Lower lobe of right lung (tissue), 2 donors: ENCODE measurements at regions of chr12 and their contacts with region 1.

Region 1: DNA sequence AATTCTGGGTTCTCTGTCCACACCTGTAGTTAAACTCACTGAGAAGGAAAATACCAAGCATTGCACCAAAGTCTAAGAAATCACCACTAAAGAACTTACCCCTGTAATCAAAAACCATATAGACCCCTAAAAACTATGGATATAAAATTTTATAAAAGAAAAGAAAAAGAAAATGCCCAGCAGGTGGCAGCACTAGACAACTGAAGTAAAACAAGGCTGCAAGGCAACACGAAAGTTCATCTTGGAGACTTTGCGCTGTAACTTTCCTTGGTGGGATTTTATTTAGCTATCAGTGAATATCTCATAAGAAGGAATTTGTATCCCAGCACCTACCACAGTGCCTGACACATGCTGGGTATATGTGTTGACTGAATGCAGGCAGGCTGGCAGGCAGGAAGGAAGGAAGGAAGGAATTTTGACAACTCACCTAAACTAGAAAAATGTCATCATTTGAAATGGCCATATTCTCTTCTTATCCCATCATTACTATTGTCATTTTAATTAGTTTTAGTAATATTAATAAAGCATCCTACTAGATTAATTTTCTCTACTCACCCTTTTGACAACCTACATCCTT is 68.2 kb upstream of the ETV6 start:
- DNase-seq: no peak
- ATAC-seq: peak in 1 of 2 donors; percentile 61
- H3K4me3 ChIP-seq: no peak overlapping the region
- H3K27ac ChIP-seq: no peak overlapping the region
- H3K4me1 ChIP-seq: peaks cover 19% of the 10 kb centered on the region
- H3K27me3 ChIP-seq: no peaks in the 10 kb centered on the region
- CTCF ChIP-seq: peak; percentile 60

Region 2: DNA sequence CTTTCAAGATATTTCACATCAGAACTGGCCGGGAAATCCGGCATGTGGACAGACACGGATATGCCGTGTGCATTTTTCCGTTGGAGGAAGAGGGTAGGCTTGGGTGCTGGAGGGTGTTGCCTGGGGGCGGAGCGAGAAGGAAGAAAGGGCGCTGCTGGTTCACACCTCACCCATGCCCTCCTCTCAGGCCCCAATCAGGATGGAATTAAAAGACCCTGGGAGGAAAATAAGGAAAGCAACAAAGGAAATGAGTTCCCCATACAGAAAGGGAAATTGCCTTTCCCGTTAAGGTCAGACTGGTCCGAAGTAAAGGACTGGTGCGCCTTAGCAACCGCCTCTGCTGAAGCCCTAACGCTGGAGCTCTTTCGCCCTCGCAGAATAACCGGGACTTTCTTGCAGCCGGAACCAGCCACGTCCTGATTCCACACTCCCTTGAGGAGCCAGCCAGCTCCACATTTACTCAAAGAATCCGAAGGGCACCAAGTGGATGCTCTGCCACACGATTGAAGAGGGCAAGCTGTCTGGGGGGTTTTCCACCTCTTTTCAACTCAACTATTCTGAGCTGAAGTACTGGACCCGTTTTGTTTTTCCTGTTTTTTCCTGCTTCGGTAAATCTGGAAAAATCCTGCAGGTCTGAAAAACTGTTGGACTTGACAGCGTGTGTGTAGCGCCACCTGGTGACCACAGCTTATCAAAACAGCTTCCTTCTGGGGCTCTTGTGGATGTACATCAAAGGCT is 451.8 kb after region 1 on chr12:
- intact Hi-C with region 1: loop called (anchors 2 kb)
- DNase-seq: peak; percentile 74
- ATAC-seq: peak; percentile 90 to 91
- H3K4me3 ChIP-seq: peak overlapping the region; percentile 57
- H3K27ac ChIP-seq: peak overlapping the region; percentile 66
- H3K4me1 ChIP-seq: peaks cover 13% of the 10 kb centered on the region
- H3K27me3 ChIP-seq: no peaks in the 10 kb centered on the region
- CTCF ChIP-seq: peak; percentile 84